HepG2 (cell line): ENCODE measurements at regions of chr12 and their contacts with region 1.

Region 1: GRCh38 chr12:71810905-71811304 is 28.7 kb upstream of the TBC1D15 start:
- DNase-seq: no peak
- ATAC-seq: no peak
- H3K4me3 ChIP-seq: no peak overlapping the region
- H3K27ac ChIP-seq: no peak overlapping the region
- H3K4me1 ChIP-seq: no peaks in the 10 kb centered on the region
- H3K27me3 ChIP-seq: 0 out of 5 replicates have a peak, but pooled peaks cover 0 to 3% of the 10 kb centered on the region in 2 experiments
- CTCF ChIP-seq: no peak
- EP300 ChIP-seq: no peak
- POLR2A ChIP-seq: no peak
- RAD21 ChIP-seq: no peak

Region 2: DNA sequence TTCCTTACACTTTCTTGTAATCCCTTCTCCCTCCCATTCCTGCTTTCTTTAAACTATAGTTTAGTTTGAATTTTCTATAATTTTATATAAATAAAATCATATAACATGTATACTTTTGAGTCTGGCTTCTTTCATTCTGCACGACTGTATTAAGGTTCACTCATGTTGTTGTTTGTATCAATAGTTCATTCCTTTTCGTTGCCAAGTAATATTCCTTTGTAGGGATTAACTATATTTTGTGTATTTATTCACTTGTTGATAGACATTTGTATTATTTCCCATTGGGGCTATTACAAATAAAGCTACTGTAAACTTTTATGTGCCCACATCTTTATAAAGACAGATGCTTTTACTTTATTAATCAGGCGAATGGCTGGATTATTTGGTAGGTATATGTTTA is 10.7 kb before region 1 on chr12:
- CTCF ChIA-PET with region 1: no interaction called
- POLR2A ChIA-PET with region 1: no interaction called
- in situ Hi-C with region 1: no loop called
- intact Hi-C with region 1: loop called (anchors 1 kb)
- DNase-seq: no peak
- ATAC-seq: no peak
- H3K4me3 ChIP-seq: no peak overlapping the region
- H3K27ac ChIP-seq: no peak overlapping the region
- H3K4me1 ChIP-seq: no peaks in the 10 kb centered on the region
- H3K27me3 ChIP-seq: no peaks in the 10 kb centered on the region
- CTCF ChIP-seq: no peak
- EP300 ChIP-seq: no peak
- POLR2A ChIP-seq: no peak
- RAD21 ChIP-seq: no peak

Region 3: DNA sequence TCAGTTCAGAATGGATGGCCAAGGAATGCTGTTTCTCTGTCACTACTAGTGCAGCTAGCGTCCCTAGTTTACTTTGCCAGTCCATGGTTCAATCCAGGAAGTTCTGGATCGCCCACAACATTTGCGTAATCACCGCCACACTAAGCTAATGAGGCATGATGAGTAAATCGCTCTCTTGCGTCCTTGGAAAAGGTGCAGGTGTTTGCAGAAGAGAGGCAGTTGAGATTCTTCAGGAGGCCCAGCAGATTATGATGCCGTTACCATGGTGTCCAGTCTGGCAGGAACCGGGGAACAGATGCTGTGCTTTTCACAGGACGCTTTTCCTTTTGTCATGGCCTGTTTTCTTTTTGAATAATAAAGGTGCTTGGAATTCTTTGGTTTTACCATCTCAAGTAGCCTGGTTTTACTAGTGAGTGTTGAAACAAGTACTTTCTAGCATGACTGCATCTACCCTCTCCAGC is 136.8 kb after region 1 on chr12:
- CTCF ChIA-PET with region 1: no interaction called
- POLR2A ChIA-PET with region 1: no interaction called
- in situ Hi-C with region 1: no loop called
- intact Hi-C with region 1: no loop called
- DNase-seq: peak; percentile 85
- ATAC-seq: peak; percentile 99
- H3K4me3 ChIP-seq: no peak overlapping the region
- H3K27ac ChIP-seq: no peak overlapping the region
- H3K4me1 ChIP-seq: peaks cover 10% of the 10 kb centered on the region
- H3K27me3 ChIP-seq: peaks cover 0 to 4% of the 10 kb centered on the region in 2 experiments; a peak in 1 of 5 replicates
- CTCF ChIP-seq: no peak
- EP300 ChIP-seq: peak; percentile 40 to 65; a peak in 2 of 4 replicates
- POLR2A ChIP-seq: no peak
- RAD21 ChIP-seq: no peak